ENCODE measurements at regions of chr9 and their contacts with region 1.

Region 1: GRCh38 chr9:124040935-124041816 is 29.6 kb downstream of the LHX2 start:
- DNase-seq: peak in 1 of 2 experiments; percentile 46
- H3K4me3 ChIP-seq: no peak overlapping the region
- H3K27ac ChIP-seq: no peak overlapping the region
- H3K4me1 ChIP-seq: no peaks in the 10 kb centered on the region
- H3K27me3 ChIP-seq: peaks cover 63% of the 10 kb centered on the region
- CTCF ChIP-seq: peak; percentile 76

Region 2: GRCh38 chr9:123401879-123402513 is 639.2 kb before region 1 on chr9:
- CTCF ChIA-PET with region 1: interaction called, 5 read pairs
- POLR2A ChIA-PET with region 1: no interaction called
- intact Hi-C with region 1: loop called (anchors 2 kb)
- DNase-seq: peak in 1 of 2 experiments; percentile 45
- H3K4me3 ChIP-seq: no peak overlapping the region
- H3K27ac ChIP-seq: no peak overlapping the region
- H3K4me1 ChIP-seq: no peaks in the 10 kb centered on the region
- H3K27me3 ChIP-seq: no peaks in the 10 kb centered on the region
- CTCF ChIP-seq: peak; percentile 81

Region 3: GRCh38 chr9:123637945-123638634 is 403.1 kb before region 1 on chr9:
- CTCF ChIA-PET with region 1: interaction called, 10 read pairs
- POLR2A ChIA-PET with region 1: no interaction called
- intact Hi-C with region 1: no loop called
- DNase-seq: no peak
- H3K4me3 ChIP-seq: no peak overlapping the region
- H3K27ac ChIP-seq: no peak overlapping the region
- H3K4me1 ChIP-seq: no peaks in the 10 kb centered on the region
- H3K27me3 ChIP-seq: no peaks in the 10 kb centered on the region
- CTCF ChIP-seq: no peak

Region 4: GRCh38 chr9:123725389-123725788 is 315.8 kb before region 1 on chr9:
- CTCF ChIA-PET with region 1: interaction called, 4 read pairs
- POLR2A ChIA-PET with region 1: interaction called, 11 read pairs
- intact Hi-C with region 1: no loop called
- DNase-seq: no peak
- H3K4me3 ChIP-seq: no peak overlapping the region
- H3K27ac ChIP-seq: no peak overlapping the region
- H3K4me1 ChIP-seq: no peaks in the 10 kb centered on the region
- H3K27me3 ChIP-seq: no peaks in the 10 kb centered on the region
- CTCF ChIP-seq: no peak

Region 5: DNA sequence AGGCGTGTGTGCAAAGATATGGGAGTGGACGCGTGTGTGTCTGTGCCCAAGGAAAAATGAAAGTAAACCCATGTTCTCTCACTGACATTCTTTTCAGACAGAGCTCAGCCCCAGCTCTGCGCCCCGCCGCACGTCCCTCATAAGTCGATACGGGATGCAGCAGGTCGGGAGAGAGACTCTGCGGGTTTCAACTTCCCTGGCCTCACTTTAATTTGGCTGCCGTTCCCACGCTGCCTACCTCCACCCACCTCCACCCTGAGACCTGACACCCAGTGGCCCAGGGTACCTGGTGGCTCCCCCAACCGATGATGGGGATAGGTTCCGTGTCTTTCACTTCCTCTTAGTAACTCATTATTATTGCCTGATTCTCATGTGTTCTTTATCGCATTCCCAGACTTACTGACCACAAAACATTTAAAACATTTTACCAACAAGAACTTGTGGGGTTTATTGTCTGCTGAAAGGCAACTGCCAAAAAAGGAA is 10.2 kb before region 1 on chr9:
- CTCF ChIA-PET with region 1: no interaction called
- POLR2A ChIA-PET with region 1: no interaction called
- intact Hi-C with region 1: no loop called
- DNase-seq: peak in 1 of 2 experiments; percentile 49
- H3K4me3 ChIP-seq: no peak overlapping the region
- H3K27ac ChIP-seq: no peak overlapping the region
- H3K4me1 ChIP-seq: no peaks in the 10 kb centered on the region
- H3K27me3 ChIP-seq: peaks cover 34% of the 10 kb centered on the region
- CTCF ChIP-seq: no peak

Region 6: GRCh38 chr9:124267271-124267807 is 226.2 kb after region 1 on chr9:
- CTCF ChIA-PET with region 1: no interaction called
- POLR2A ChIA-PET with region 1: no interaction called
- intact Hi-C with region 1: loop called (anchors 10 kb)
- DNase-seq: peak in 1 of 2 experiments; percentile 88
- H3K4me3 ChIP-seq: no peak overlapping the region
- H3K27ac ChIP-seq: no peak overlapping the region
- H3K4me1 ChIP-seq: no peaks in the 10 kb centered on the region
- H3K27me3 ChIP-seq: no peaks in the 10 kb centered on the region
- CTCF ChIP-seq: no peak

Region 7: GRCh38 chr9:124322618-124323432 is 281.6 kb after region 1 on chr9:
- CTCF ChIA-PET with region 1: no interaction called
- POLR2A ChIA-PET with region 1: no interaction called
- intact Hi-C with region 1: no loop called
- DNase-seq: no peak
- H3K4me3 ChIP-seq: no peak overlapping the region
- H3K27ac ChIP-seq: no peak overlapping the region
- H3K4me1 ChIP-seq: no peaks in the 10 kb centered on the region
- H3K27me3 ChIP-seq: no peaks in the 10 kb centered on the region
- CTCF ChIP-seq: no peak